Heart left ventricle (tissue), 16 donors: ENCODE measurements at regions of chr7 and their contacts with region 1.

Region 1: GRCh38 chr7:22726345-22727185 is 435 bp upstream of the IL6 start:
- DNase-seq: peak in 4 of 5 donors; percentile 31 to 56 (median 42)
- ATAC-seq: peak; percentile 29 to 72 (median 52)
- H3K4me3 ChIP-seq: peak overlapping the region; percentile 3 to 57 (median 45)
- H3K27ac ChIP-seq: peak overlapping the region; percentile 19 to 85 (median 70)
- H3K4me1 ChIP-seq: peaks cover 4 to 78% (median 40%) of the 10 kb centered on the region in 12 donors
- H3K27me3 ChIP-seq: no peaks in the 10 kb centered on the region
- CTCF ChIP-seq: peak; percentile 27 to 61 (median 46)
- POLR2A ChIP-seq: no peak

Region 2: DNA sequence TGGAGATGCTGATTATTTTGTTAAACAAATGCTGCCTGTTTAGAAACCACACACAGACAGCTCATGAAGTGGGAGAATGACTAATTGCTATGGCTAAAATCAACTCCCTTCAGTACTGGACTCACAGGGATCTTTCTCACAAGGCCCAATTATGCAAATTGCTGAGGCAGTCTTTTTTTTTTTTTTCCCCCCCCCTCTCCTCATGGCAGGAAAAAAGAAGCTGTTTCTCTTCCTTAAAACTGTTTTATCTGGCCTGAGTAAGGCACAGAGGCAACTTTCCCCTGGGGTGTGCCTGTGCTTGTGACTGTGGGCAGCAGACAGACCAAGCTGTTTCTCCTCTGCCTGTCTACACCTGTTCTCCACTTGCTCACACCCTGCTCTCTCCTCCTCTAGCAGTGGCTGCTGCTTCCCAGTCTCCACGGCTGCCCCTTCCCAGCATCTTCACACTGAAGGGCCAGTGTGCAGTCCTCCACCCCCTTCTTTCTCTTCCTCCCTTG is 161.2 kb before region 1 on chr7:
- intact Hi-C with region 1: loop called in 9 of 10 experiments (anchors 1 to 5 kb)
- DNase-seq: peak in 3 of 5 donors; percentile 43 to 68 (median 55)
- ATAC-seq: peak in 3 of 4 donors; percentile 19 to 51 (median 27)
- H3K4me3 ChIP-seq: peak overlapping the region in 1 of 12 donors; percentile 5
- H3K27ac ChIP-seq: peak overlapping the region; percentile 18 to 81 (median 71)
- H3K4me1 ChIP-seq: peaks cover 7 to 71% (median 48%) of the 10 kb centered on the region in 12 donors
- H3K27me3 ChIP-seq: peaks cover 0 to 4% (median 0%) of the 10 kb centered on the region in 9 donors
- CTCF ChIP-seq: no peak
- POLR2A ChIP-seq: no peak